ENCODE measurements at regions of chr10 and their contacts with region 1.

Region 1: DNA sequence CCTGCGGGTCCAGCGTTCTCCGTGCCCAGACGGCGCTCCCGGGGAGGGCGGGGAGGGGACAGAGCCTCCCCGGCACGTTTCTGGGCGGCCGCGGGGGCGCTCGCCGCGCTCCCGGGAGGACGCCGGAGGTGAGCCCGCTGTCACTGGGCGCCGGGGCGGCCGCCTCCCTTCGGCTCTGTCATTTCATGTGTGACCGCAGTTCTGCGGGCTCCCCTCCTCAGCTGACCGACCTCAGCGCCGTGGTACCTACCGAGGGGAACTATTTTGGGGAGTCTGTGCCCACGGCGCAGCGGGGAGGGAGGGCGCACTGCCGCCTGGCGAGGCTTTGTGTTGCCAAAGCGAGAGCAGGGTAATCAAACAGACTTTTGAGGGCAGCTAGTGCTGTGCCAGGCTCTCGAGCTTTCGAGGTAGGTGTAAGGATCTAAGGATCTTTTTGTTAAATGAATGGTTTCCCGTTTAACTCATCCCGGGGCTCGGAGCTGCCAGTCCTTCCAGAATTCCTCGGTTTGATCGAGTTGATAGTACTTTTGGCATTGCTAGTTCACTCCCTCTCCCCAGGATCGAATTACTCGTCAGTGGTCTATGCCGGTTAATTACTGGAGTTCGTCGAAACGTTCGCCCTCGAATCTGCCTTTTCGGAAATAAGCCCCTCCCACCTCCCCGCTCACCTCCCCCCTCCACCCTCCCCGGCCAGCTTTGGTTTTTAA is 1.9 kb downstream of the ARID5B start:
- DNase-seq: peak; percentile 67 to 78 (median 70)
- H3K4me3 ChIP-seq: peak overlapping the region; percentile 63 to 88
- H3K4me3 Mint-ChIP-seq: peak overlapping the region; percentile 86 to 96 (median 94)
- H3K27ac ChIP-seq: peak overlapping the region; percentile 80
- H3K27ac Mint-ChIP-seq: peak overlapping the region; percentile 84 to 98 (median 97)
- H3K4me1 ChIP-seq: peaks cover 51% of the 10 kb centered on the region
- H3K4me1 Mint-ChIP-seq: peaks cover 28 to 63% (median 40%) of the 10 kb centered on the region in 4 donors
- H3K27me3 ChIP-seq: no peaks in the 10 kb centered on the region
- H3K27me3 Mint-ChIP-seq: no peaks in the 10 kb centered on the region

Region 2: GRCh38 chr10:61750929-61751471 is 152.4 kb before region 1 on chr10:
- CTCF ChIA-PET with region 1: interaction called, 21 read pairs
- POLR2A ChIA-PET with region 1: interaction called, 17 read pairs
- intact Hi-C with region 1: loop called (anchors 1 kb)
- DNase-seq: peak; percentile 55 to 67 (median 65)
- H3K4me3 ChIP-seq: no peak overlapping the region
- H3K4me3 Mint-ChIP-seq: peak overlapping the region in 3 of 8 donors; percentile 24 to 30 (median 29)
- H3K27ac ChIP-seq: no peak overlapping the region
- H3K27ac Mint-ChIP-seq: peak overlapping the region in 2 of 7 donors; percentile 57 to 64
- H3K4me1 ChIP-seq: peaks cover 20% of the 10 kb centered on the region
- H3K4me1 Mint-ChIP-seq: peaks cover 16 to 29% (median 21%) of the 10 kb centered on the region in 4 donors
- H3K27me3 ChIP-seq: no peaks in the 10 kb centered on the region
- H3K27me3 Mint-ChIP-seq: no peaks in the 10 kb centered on the region

Region 3: DNA sequence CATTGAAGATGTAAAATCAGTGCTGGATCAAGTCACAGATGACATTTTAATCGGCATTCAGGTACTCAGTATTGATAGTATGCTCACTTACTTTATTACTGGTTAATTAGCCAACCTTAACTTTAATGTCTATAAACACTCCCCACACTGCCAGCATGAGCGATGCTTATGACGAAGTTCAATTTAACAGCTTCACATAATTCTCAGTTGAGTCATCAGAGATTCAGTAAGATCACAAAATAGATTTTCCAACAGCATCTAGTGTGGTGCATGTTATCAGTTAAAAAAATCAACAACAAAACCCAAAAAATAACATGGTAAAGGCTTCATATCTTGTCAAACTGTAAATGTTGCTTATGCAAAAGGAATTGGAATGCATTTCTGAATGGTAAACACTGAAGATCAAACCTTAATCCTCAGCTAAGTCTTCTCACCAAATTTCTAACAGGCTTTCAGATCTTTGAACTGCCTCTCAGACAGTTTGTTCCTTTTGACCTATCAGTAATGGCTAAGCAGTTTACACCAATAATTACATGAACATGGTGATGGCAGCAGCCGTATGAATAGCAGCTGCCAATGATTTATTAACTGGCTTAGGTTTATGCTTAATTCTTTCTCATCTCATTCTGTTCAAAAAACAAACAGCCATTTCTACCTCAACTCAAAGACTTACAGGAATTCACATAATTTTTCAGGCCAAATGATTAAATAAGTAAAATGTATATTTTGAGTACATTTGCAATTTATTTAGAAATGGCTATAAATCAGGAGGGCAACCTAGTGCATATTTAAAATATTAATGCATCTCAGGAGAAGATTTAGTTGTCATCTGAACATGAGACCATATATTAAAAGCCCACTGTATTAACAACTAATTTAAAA is 142.2 kb before region 1 on chr10:
- CTCF ChIA-PET with region 1: no interaction called
- POLR2A ChIA-PET with region 1: no interaction called
- intact Hi-C with region 1: no loop called
- DNase-seq: no peak
- H3K4me3 ChIP-seq: no peak overlapping the region
- H3K4me3 Mint-ChIP-seq: no peak overlapping the region
- H3K27ac ChIP-seq: no peak overlapping the region
- H3K27ac Mint-ChIP-seq: peak overlapping the region in 1 of 7 donors; percentile 53
- H3K4me1 ChIP-seq: peaks cover 13% of the 10 kb centered on the region
- H3K4me1 Mint-ChIP-seq: peaks cover 12 to 17% (median 12%) of the 10 kb centered on the region in 4 donors
- H3K27me3 ChIP-seq: no peaks in the 10 kb centered on the region
- H3K27me3 Mint-ChIP-seq: no peaks in the 10 kb centered on the region

Region 4: GRCh38 chr10:61937631-61938351 is 34.4 kb after region 1 on chr10:
- CTCF ChIA-PET with region 1: interaction called, 115 read pairs
- POLR2A ChIA-PET with region 1: interaction called, 175 read pairs
- intact Hi-C with region 1: no loop called
- DNase-seq: no peak
- H3K4me3 ChIP-seq: peak overlapping the region in 1 of 2 donors; percentile 15
- H3K4me3 Mint-ChIP-seq: peak overlapping the region; percentile 3 to 83 (median 68)
- H3K27ac ChIP-seq: peak overlapping the region; percentile 23
- H3K27ac Mint-ChIP-seq: peak overlapping the region; percentile 31 to 94 (median 87)
- H3K4me1 ChIP-seq: peaks cover 78% of the 10 kb centered on the region
- H3K4me1 Mint-ChIP-seq: peaks cover 66 to 87% (median 75%) of the 10 kb centered on the region in 4 donors
- H3K27me3 ChIP-seq: no peaks in the 10 kb centered on the region
- H3K27me3 Mint-ChIP-seq: no peaks in the 10 kb centered on the region

Region 5: DNA sequence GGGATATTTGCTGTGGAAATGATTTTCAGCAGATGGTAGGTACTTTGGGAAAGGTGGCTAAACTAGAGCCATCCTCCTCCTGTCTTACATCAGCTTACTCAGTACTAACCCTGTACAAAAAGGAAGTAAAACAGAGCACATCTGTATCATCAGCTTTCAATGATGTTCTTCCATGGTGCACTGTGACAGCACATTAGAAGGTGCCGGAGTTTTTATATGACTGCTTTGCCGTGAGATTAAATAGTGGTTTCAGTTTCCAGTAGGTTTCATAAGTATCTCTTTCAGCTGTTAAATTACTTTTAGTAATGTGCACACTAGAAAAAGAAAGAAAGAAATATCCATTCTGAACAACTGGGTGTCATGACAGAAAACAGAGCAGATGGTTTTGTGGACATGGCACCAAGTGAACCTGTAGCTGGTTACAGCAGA is 84.6 kb after region 1 on chr10:
- CTCF ChIA-PET with region 1: interaction called, 24 read pairs
- POLR2A ChIA-PET with region 1: interaction called, 86 read pairs
- intact Hi-C with region 1: loop called (anchors 1 kb)
- DNase-seq: peak in 4 of 5 donors; percentile 48 to 56 (median 50)
- H3K4me3 ChIP-seq: peak overlapping the region in 1 of 2 donors; percentile 6
- H3K4me3 Mint-ChIP-seq: peak overlapping the region; percentile 34 to 77 (median 60)
- H3K27ac ChIP-seq: peak overlapping the region; percentile 47
- H3K27ac Mint-ChIP-seq: peak overlapping the region; percentile 88 to 96 (median 92)
- H3K4me1 ChIP-seq: peaks cover 69% of the 10 kb centered on the region
- H3K4me1 Mint-ChIP-seq: peaks cover 52 to 81% (median 67%) of the 10 kb centered on the region in 4 donors
- H3K27me3 ChIP-seq: no peaks in the 10 kb centered on the region
- H3K27me3 Mint-ChIP-seq: no peaks in the 10 kb centered on the region

Region 6: DNA sequence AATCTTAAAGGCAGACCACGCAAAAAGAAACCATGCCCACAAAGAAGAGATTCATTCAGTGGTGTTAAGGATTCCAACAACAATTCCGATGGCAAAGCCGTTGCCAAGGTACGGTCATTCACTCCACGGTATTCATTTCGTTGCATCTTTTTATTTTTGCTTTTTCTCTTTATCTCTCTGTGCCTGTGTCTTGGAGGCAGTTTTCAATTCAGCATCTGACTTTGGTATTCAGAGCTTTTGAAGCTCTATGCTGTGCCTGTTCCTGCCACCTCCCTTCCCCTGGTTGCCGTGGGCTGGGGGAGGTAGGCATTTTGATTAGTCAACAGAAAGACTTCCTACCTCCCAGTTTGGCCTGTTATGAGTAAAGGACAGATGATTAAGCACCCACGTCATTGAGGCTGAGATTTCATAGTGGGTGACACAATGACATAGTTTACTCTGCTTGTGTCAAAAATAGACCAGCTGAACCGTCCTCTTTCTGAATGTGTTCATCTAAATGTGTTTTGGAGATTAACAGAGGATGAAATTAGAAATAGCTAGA is 147.6 kb after region 1 on chr10:
- CTCF ChIA-PET with region 1: interaction called, 228 read pairs
- POLR2A ChIA-PET with region 1: interaction called, 251 read pairs
- intact Hi-C with region 1: loop called (anchors 1 kb)
- DNase-seq: peak; percentile 83 to 94 (median 88)
- H3K4me3 ChIP-seq: peak overlapping the region; percentile 69 to 82
- H3K4me3 Mint-ChIP-seq: peak overlapping the region; percentile 89 to 98 (median 91)
- H3K27ac ChIP-seq: peak overlapping the region; percentile 87
- H3K27ac Mint-ChIP-seq: peak overlapping the region; percentile 92 to 100 (median 98)
- H3K4me1 ChIP-seq: peaks cover 78% of the 10 kb centered on the region
- H3K4me1 Mint-ChIP-seq: peaks cover 67 to 98% (median 76%) of the 10 kb centered on the region in 4 donors
- H3K27me3 ChIP-seq: no peaks in the 10 kb centered on the region
- H3K27me3 Mint-ChIP-seq: no peaks in the 10 kb centered on the region

Region 7: DNA sequence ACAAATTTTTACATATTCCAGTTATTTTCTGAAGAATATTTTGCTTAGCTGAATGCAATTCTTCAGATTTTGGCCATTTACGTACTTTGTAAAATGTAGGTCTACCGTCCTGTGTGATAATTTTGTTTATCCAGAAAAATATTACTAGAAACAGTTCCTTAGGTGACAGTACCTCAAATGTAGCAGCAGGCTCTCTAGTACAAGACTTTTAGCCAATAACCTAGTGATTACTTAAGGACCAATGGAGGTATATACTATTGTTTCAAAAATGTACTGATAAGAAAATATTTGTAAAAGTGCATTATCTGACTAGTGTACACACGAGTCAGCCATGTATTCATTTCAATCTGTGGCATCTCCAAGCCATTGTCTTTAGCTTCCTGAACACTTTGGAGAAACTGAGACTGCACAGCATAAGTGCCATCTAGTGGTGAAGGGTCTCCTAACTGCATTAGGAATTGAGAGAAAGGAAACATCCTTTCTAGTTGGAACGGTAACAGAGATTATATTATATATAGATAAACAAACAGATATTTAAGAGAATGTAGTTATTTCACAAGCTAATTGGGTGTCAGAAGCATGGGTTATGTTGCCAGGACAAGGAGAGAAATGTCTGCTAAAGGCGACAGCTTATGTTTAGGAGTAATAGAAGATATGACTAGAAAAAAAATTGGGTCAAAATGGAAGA is 341.6 kb after region 1 on chr10:
- CTCF ChIA-PET with region 1: interaction called, 38 read pairs
- POLR2A ChIA-PET with region 1: interaction called, 16 read pairs
- intact Hi-C with region 1: no loop called
- DNase-seq: peak; percentile 52 to 68 (median 65)
- H3K4me3 ChIP-seq: no peak overlapping the region
- H3K4me3 Mint-ChIP-seq: peak overlapping the region in 6 of 8 donors; percentile 22 to 62 (median 42)
- H3K27ac ChIP-seq: no peak overlapping the region
- H3K27ac Mint-ChIP-seq: peak overlapping the region in 4 of 7 donors; percentile 11 to 70 (median 37)
- H3K4me1 ChIP-seq: peaks cover 37% of the 10 kb centered on the region
- H3K4me1 Mint-ChIP-seq: peaks cover 22 to 35% (median 25%) of the 10 kb centered on the region in 4 donors
- H3K27me3 ChIP-seq: no peaks in the 10 kb centered on the region
- H3K27me3 Mint-ChIP-seq: peaks cover 0 to 1% of the 10 kb centered on the region in 2 donors

Region 8: DNA sequence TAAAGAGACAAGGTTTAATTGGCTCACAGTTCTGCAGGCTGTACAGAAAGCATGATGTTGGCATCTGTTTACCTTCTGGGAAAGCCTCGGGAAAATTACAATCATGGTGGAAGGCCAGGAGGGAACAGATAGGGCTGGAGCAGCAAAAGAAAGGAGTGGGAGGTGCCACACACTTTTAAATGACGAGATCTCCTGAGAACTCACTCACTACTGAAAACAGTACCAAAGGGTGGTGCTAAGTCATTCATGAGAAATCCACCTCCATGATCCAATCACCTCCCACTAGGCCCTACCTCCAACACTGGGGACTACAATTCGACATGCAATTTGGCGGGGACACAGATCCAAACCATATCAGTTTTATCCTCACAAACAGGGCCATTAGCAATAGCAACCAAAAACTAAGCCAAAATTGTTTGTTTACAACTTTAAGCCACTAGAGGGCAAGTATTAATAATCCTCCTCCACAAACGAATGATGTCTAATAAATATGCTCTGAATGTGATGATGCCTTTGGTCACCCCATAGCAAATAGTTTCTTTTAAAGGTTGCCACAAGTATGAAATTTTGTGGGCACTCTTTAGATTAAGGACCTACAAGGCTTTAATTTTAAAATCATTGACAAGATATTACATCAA is 1100.6 kb after region 1 on chr10:
- CTCF ChIA-PET with region 1: no interaction called
- POLR2A ChIA-PET with region 1: no interaction called
- intact Hi-C with region 1: no loop called
- DNase-seq: peak in 1 of 5 donors; percentile 6
- H3K4me3 ChIP-seq: no peak overlapping the region
- H3K4me3 Mint-ChIP-seq: no peak overlapping the region
- H3K27ac ChIP-seq: no peak overlapping the region
- H3K27ac Mint-ChIP-seq: no peak overlapping the region
- H3K4me1 ChIP-seq: no peaks in the 10 kb centered on the region
- H3K4me1 Mint-ChIP-seq: peaks cover 0 to 1% (median 0%) of the 10 kb centered on the region in 4 donors
- H3K27me3 ChIP-seq: no peaks in the 10 kb centered on the region
- H3K27me3 Mint-ChIP-seq: peaks cover 4 to 20% of the 10 kb centered on the region in 2 donors

Measured in CD4-positive, alpha-beta memory T cell (primary cell).